ENCODE measurements at regions of chr17 and their contacts with region 1.

Region 1: DNA sequence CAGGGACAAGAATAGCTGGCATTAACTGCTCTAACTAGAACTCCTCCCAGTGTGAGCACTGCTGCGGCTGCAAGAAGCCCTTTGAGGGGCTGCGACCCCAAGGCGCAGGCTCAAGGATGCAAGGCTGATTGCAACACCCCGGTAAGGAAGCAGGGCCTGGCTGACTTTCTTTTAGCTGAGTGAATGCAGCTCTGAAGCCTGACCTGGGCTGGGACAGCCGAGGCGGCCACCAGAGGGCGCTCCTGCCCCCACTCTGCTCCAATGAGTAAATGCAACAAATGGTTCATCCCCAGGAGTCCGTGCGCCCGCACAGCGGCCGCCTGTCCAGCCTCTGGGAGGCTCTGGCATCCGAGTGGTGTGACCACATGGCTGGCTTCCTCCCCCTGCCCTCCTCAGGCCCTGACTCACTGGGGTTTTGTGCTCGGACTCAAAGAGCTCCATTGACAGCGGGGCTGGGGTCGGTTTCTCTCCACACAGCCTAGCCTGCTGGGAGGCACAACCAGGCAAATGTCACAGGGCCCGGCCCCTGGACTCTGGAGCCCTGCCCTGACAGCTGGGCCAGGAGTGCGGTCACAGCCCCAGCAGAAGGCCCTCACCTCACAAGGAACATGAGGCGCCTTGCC is at the start of gene SMIM5:
- DNase-seq: peak; percentile 62
- H3K4me3 ChIP-seq: no peak within 1 kb of the TSS
- H3K27ac ChIP-seq: peak within 1 kb of the TSS; percentile 70
- H3K27me3 ChIP-seq: no peaks in the 10 kb centered on the region
- CTCF ChIP-seq: peak; percentile 93
- polyA plus RNA-seq, gene SMIM5: not detected in 2 replicates

Region 2: DNA sequence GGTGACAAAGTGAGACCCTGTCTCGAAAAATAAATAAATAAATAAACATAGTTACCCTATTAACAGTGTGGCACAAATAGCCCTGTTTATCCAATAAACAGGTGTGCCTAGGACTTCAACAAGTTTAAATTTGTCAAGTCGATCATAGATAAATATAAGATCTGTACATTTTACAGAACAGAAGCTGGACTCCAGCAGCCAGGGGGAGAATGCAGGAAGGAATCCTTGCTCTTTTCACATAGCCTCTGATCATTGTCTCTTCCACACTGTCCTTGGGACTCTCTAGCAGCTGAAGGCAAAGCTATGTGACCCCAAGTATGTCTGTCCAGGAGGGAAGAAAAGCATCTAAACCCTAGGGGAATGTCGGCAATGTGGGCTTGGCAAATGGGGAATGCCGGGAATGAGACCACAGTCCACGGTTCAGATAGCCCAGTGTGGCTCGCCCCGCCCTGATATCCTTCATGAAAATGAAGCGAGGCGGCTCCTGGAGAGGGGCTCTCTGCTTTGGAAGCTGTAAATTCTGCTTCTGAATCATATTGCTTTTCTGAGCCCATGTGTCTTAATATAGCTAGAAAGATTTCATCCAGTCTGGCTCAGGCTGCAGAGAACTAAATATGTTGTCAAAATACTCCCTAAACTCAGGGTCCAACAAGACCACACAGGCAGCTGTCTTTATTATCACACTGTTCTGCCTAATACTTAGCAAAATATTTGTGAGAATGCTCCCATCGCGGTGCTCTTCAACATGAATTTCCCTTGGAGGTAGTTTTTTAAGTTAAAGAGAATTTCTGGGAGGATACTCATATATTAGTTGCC is 202.6 kb before region 1 on chr17:
- CTCF ChIA-PET with region 1: interaction called, 21 read pairs
- POLR2A ChIA-PET with region 1: no interaction called
- DNase-seq: no peak
- H3K4me3 ChIP-seq: no peak overlapping the region
- H3K27ac ChIP-seq: no peak overlapping the region
- H3K27me3 ChIP-seq: no peaks in the 10 kb centered on the region
- CTCF ChIP-seq: peak; percentile 20; the same call in 1 of the 2 replicates

Region 3: GRCh38 chr17:75610103-75610984 is 22.6 kb before region 1 on chr17:
- CTCF ChIA-PET with region 1: interaction called, 16 read pairs
- POLR2A ChIA-PET with region 1: no interaction called
- DNase-seq: no peak
- H3K4me3 ChIP-seq: no peak overlapping the region
- H3K27ac ChIP-seq: no peak overlapping the region
- H3K27me3 ChIP-seq: peaks cover 2% of the 10 kb centered on the region
- CTCF ChIP-seq: no peak

Region 4: GRCh38 chr17:75661531-75661930 is 28.6 kb after region 1 on chr17:
- CTCF ChIA-PET with region 1: interaction called, 226 read pairs
- POLR2A ChIA-PET with region 1: interaction called, 8 read pairs
- DNase-seq: no peak
- H3K4me3 ChIP-seq: no peak overlapping the region
- H3K27ac ChIP-seq: no peak overlapping the region
- H3K27me3 ChIP-seq: no peaks in the 10 kb centered on the region
- CTCF ChIP-seq: no peak

Region 5: GRCh38 chr17:75688209-75688825 is 55.3 kb after region 1 on chr17:
- CTCF ChIA-PET with region 1: interaction called, 17 read pairs
- POLR2A ChIA-PET with region 1: no interaction called
- DNase-seq: no peak
- H3K4me3 ChIP-seq: no peak overlapping the region
- H3K27ac ChIP-seq: no peak overlapping the region
- H3K27me3 ChIP-seq: no peaks in the 10 kb centered on the region
- CTCF ChIP-seq: no peak

Region 6: DNA sequence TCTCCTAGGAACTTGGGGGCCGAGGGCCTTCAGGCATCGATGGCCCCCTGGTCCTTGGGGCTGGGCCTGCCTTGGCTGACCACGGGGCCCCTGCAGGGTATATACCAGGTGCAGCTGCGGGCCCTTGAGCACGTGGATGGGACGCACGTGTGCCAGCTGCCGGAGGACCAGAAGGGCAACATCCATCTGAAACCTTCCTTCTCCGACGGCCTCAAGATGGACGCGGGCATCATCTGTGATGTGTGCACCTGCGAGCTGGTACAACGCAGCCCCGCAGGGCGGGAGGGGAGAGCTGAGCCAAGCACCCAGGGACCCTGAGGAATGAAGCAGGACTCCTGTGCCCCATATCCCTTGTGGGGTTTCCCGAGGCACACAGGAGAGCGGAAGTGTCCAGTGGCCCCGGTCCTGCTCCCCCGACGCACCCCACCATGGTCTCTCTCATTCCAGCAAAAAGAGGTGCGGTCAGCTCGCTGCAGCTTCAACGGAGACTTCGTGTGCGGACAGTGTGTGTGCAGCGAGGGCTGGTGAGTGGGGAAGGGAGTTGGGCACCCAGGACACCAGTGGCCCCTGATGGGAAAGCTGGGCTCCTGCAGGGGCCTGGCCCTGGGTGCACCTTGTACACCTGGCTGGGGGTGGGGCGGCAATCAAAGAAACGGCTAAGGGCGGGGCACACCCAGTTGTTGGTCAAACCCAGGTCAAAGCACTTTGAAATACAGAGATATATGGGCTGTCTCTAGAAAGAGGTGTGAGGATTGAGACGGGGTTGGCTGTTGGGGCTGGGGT is 98.9 kb after region 1 on chr17:
- CTCF ChIA-PET with region 1: interaction called, 30 read pairs
- POLR2A ChIA-PET with region 1: no interaction called
- DNase-seq: no peak
- H3K4me3 ChIP-seq: no peak overlapping the region
- H3K27ac ChIP-seq: no peak overlapping the region
- H3K27me3 ChIP-seq: peaks cover 12% of the 10 kb centered on the region
- CTCF ChIP-seq: no peak